ENCODE measurements at regions of chr17 and their contacts with region 1.

Region 1: DNA sequence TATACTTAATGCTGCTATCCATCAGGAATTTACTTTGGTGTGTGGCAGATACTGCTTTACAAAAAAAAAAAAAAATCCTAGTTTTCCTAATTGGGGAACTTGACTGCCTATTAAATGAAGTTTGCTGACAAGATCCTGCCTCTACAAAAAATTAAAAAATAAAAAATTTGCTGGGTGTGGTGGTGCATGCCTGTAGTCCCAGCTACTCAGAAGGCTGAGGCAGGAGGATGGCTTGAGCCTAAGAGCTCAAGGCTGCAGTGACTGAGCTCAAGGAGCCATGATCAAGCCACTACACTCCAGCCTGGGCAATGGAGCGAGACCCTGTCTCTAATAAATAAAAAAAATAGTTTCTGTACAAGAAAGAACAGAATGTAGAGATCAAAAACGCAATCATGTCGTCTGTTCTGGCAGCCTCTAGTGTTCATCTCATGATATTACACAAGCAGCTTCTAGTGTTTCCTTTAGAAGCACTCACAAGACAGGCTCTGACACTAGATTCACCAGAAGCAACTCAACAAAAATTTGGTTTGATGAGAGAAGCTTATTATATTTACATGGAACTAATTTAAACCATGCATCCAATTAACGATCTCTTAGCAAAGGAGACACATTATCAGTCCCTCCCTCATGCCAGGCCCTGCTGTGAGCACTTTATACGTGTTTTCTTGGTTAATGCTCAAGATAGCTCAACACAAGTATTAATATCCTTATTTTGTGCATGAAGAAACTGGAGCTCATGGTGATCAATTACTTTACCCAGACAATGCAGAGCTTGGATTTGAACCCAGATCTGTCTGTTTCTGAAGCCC is 6.8 kb upstream of the KRTAP17-1 start:
- DNase-seq: peak; percentile 42
- H3K4me3 ChIP-seq: no peak overlapping the region
- H3K27ac ChIP-seq: no peak overlapping the region
- H3K27me3 ChIP-seq: no peaks in the 10 kb centered on the region
- CTCF ChIP-seq: peak; percentile 96

Region 2: GRCh38 chr17:40854159-40854814 is 468.0 kb before region 1 on chr17:
- CTCF ChIA-PET with region 1: interaction called, 22 read pairs
- POLR2A ChIA-PET with region 1: no interaction called
- DNase-seq: peak; percentile 47
- H3K4me3 ChIP-seq: no peak overlapping the region
- H3K27ac ChIP-seq: no peak overlapping the region
- H3K27me3 ChIP-seq: no peaks in the 10 kb centered on the region
- CTCF ChIP-seq: no peak

Region 3: DNA sequence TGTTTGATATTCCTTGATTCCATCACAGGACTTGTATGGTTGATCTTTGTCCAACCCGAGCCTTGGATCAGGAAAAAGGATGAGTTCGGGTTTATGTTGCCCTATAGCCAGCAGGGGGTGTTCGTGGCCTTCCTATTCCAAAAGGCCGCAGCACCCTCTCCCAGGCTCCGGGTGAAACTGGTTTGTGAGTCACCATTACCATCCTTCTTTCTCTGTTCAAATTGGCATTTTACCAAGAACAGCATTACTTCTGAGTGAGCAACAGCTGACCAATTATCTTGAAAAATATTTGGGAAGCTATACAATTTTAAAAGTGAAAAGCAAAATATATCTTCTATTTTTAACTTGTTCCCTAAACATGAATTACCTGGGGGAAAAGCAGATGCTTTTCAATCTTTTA is 412.9 kb before region 1 on chr17:
- CTCF ChIA-PET with region 1: interaction called, 42 read pairs
- POLR2A ChIA-PET with region 1: no interaction called
- DNase-seq: peak; percentile 92
- H3K4me3 ChIP-seq: no peak overlapping the region
- H3K27ac ChIP-seq: peak overlapping the region; percentile 89
- H3K27me3 ChIP-seq: no peaks in the 10 kb centered on the region
- CTCF ChIP-seq: peak; percentile 85

Region 4: GRCh38 chr17:40915199-40915661 is 407.1 kb before region 1 on chr17:
- CTCF ChIA-PET with region 1: interaction called, 42 read pairs
- POLR2A ChIA-PET with region 1: no interaction called
- DNase-seq: peak; percentile 87
- H3K4me3 ChIP-seq: no peak overlapping the region
- H3K27ac ChIP-seq: no peak overlapping the region
- H3K27me3 ChIP-seq: no peaks in the 10 kb centered on the region
- CTCF ChIP-seq: no peak

Region 5: DNA sequence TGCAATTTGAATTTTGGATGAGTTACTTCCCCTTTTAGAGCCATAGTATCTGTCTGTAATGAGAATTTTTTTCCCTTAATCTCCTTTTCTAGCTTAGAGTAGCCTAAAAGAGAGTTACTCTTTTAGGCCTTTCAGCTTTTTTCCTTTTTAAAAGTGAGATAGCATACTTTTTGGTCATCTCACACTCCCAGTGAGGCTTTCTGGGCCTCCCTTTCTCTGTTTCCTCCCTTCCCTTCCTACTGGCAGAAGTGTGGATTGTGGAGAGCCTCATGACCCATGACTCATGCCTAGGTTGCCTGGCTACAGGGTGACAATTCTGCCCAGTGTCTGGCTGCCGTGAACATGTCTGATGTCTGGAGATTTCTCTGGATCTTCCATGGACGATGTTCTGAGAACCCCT is 400.1 kb before region 1 on chr17:
- CTCF ChIA-PET with region 1: interaction called, 10 read pairs
- POLR2A ChIA-PET with region 1: no interaction called
- DNase-seq: peak; percentile 43
- H3K4me3 ChIP-seq: no peak overlapping the region
- H3K27ac ChIP-seq: no peak overlapping the region
- H3K27me3 ChIP-seq: no peaks in the 10 kb centered on the region
- CTCF ChIP-seq: no peak

Region 6: DNA sequence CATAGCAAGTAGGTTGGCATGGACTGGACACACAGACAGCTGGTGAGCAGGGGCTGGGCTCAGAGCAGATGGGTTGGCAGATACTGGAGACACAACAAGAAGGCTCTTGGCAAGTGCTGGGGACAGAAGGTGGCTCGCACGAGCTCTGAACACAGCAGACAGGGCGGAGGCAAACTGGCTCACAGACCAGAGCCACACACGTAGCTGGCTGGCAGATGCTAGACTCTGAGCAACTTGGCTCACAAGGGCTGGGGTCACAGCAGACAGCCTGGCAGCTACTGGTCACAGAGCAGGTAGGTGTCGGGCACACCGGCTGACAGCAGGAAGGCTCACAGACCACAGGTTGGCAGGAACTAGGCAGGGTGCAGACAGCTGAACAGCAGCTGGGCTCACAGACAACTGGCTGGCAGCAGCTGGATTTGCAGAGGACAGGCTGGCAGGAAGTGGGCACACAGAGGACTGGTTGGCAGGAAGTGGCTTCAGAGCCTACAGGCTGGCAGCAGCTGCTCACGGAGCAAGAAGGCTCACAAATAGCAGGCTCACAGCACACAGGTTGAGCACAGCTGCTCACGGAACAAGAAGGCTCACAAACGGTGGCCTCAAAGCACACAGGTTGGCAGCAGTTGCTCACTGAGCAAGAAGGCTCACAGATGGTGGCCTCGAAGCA is 13.9 kb before region 1 on chr17:
- CTCF ChIA-PET with region 1: interaction called, 12 read pairs
- POLR2A ChIA-PET with region 1: no interaction called
- DNase-seq: no peak
- H3K4me3 ChIP-seq: no peak overlapping the region
- H3K27ac ChIP-seq: no peak overlapping the region
- H3K27me3 ChIP-seq: peaks cover 2% of the 10 kb centered on the region
- CTCF ChIP-seq: no peak

Region 7: DNA sequence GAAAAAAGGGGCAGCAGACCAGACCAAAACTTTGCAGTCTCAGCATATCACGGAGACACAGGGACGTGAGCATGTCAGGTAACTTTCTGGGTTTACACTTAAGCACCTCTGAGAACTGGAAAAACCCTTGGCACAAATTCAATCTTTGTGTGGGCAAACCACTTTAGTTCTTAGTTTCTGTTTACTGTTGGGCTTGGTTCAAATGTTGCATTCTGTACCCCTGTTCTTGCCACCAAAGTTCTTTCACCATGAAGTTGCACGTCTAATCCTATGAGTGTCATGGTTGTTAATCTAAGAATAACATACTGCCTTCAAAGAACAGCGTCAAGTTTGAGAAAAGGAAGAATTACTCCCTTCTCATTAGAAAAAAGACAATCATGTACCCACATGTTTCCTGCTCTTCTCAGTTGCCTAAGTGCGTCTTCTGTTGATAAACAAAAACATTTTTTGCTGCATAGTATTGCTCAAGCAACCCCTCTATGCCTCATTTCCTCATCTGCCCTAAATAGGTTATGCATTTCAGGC is 16.7 kb after region 1 on chr17:
- CTCF ChIA-PET with region 1: interaction called, 13 read pairs
- POLR2A ChIA-PET with region 1: no interaction called
- DNase-seq: no peak
- H3K4me3 ChIP-seq: no peak overlapping the region
- H3K27ac ChIP-seq: no peak overlapping the region
- H3K27me3 ChIP-seq: no peaks in the 10 kb centered on the region
- CTCF ChIP-seq: no peak